ENCODE measurements at regions of chr2 and their contacts with region 1.

Region 1: DNA sequence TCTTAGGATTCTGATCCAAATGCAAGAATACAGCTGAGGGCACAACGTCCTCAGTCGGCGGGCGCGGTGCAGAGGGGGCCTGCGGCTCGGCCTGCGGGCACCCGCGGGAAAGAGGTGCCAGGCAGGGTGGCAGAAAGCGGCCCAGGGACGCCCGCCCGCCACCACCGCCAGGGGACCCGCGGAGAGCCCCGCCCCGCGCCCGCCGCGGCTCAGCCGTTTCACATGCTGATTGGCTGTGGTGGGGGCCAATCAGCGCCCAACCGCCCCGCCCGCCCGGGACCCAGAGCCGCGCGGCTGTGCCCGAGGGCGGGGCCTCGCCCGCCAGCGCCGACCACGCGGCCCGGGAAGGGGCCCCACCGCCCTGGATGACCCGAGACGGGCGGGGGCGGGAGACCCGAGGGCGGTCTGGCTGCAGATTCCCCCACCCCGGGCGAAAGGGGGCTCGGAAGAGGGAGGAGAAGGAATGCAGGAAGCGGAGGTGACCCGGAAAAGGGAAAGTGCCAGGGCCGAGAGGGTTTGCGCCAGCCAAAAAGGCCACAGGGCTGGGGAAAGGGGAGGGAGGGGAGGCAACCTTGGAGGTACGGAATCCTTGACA is 8.0 kb downstream of the IRS1 start:
- DNase-seq: peak; percentile 90 to 94
- ATAC-seq: peak; percentile 84 to 95 (median 93)
- H3K4me3 ChIP-seq: peak overlapping the region; percentile 44 to 95 (median 78)
- H3K27ac ChIP-seq: peak overlapping the region; percentile 90 to 97 (median 94)
- H3K4me1 ChIP-seq: peaks cover 8 to 94% (median 87%) of the 10 kb centered on the region in 9 donors
- H3K27me3 ChIP-seq: no peaks in the 10 kb centered on the region
- CTCF ChIP-seq: peak; percentile 10 to 68 (median 53)

Region 2: DNA sequence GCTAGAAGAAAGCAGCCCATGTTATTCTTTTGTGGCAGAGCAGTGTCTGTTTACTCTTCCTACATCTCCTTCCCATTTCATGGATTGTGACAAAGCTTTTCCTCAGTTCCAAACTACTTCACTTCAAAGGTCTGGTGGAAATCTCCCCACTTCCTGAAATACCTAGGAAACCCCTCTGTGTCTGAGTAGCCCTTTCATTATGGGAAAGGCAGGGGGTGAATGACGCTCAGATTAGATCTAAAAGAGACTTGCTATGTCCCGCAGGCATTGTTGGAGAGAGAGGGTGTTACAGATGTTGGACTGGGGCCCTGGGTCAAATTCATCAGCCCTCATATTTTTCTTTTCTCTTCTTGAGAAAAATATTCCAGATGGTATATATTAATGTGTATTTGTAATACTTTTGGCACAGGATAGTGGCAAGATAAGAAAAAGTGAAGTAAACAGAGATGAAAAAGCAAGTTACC is 667.0 kb before region 1 on chr2:
- intact Hi-C with region 1: loop called in 2 of 10 experiments (anchors 10 kb)
- DNase-seq: no peak
- ATAC-seq: peak in 3 of 8 donors; percentile 25 to 35 (median 28)
- H3K4me3 ChIP-seq: no peak overlapping the region
- H3K27ac ChIP-seq: peak overlapping the region in 4 of 10 donors; percentile 18 to 47 (median 26)
- H3K4me1 ChIP-seq: peaks cover 0 to 59% (median 5%) of the 10 kb centered on the region in 9 donors
- H3K27me3 ChIP-seq: no peaks in the 10 kb centered on the region
- CTCF ChIP-seq: no peak

Region 3: DNA sequence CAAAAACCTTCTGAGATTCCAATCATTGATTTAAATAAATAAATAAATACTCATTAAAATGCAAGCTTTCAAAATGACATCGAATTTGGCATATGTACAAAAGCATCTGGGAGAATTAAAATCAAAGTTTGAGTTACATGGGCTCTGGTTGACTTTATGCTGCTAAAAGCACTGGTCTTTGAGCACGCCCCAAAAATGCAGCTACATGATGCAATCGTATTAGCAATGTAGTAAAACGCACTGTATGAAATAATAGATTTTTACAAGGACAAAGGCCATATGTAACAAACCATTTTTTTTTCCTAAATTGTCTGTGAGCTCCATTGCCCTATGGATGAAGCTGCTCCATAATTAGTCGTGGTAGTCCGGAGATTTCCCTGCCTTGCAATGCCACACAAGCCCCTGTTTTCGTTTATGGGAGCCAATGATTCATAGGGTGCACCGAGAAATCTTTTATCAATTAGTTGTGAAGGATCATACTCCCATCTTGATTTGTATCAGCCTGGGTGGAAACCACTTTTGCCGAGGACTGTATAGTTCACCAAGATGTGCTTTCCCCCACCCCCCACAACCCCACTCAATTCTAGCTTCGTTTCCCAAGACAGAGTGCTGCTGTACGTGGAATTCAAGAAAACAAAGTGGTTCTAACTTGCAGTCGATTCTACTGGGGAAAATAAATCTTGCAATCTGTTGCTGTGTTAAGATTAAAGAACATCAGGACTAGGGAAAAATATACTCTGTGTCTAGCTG is 260.3 kb before region 1 on chr2:
- intact Hi-C with region 1: loop called in 1 of 10 experiments (anchors 10 kb)
- DNase-seq: no peak
- ATAC-seq: no peak
- H3K4me3 ChIP-seq: no peak overlapping the region
- H3K27ac ChIP-seq: no peak overlapping the region
- H3K4me1 ChIP-seq: no peaks in the 10 kb centered on the region
- H3K27me3 ChIP-seq: no peaks in the 10 kb centered on the region
- CTCF ChIP-seq: no peak

Region 4: GRCh38 chr2:226655871-226656270 is 135.7 kb before region 1 on chr2:
- intact Hi-C with region 1: loop called in 7 of 10 experiments (anchors 5 to 10 kb)
- DNase-seq: no peak
- ATAC-seq: no peak
- H3K4me3 ChIP-seq: no peak overlapping the region
- H3K27ac ChIP-seq: no peak overlapping the region
- H3K4me1 ChIP-seq: peaks cover 7 to 50% (median 31%) of the 10 kb centered on the region in 9 donors
- H3K27me3 ChIP-seq: peaks cover 0 to 38% (median 0%) of the 10 kb centered on the region in 7 donors
- CTCF ChIP-seq: no peak

Region 5: GRCh38 chr2:226721541-226721940 is 70.0 kb before region 1 on chr2:
- intact Hi-C with region 1: loop called in 4 of 10 experiments (anchors 5 to 10 kb)
- DNase-seq: peak; percentile 41
- ATAC-seq: peak in 1 of 8 donors; percentile 6
- H3K4me3 ChIP-seq: no peak overlapping the region
- H3K27ac ChIP-seq: no peak overlapping the region
- H3K4me1 ChIP-seq: peaks cover 3 to 34% (median 26%) of the 10 kb centered on the region in 9 donors
- H3K27me3 ChIP-seq: no peaks in the 10 kb centered on the region
- CTCF ChIP-seq: no peak

Region 6: DNA sequence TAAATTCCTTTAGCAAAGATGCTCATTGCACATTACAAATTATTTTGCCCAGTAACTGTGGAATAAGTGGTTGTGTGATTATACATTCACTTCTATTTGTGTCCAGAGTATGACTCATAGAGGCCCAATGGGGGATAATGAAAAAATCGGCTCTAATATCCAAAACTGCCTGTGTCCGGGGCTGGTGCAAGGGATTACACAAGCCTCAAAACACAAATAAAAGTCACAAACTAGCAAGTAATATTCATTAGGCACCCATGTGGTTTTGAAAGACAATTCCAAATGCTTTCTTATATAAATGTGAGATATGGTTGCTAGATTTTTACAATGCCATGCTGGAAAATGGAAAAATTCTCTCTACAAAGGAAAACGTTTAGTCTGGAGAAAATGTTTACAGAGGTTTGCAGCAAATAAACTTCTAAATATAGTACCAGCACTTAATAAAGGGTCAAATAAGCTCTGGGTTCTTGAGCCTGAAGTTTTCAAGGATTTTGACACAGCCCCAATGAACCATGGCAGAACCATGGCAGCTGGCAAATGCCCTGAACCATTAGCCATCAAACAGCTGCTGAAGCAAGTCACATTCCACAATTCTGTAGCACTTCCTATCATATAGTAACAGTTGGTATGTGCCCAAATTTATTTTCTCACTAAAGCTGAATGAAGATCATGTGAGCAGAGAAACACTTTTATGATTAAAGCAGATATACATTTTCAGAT is 32.5 kb before region 1 on chr2:
- intact Hi-C with region 1: loop called in 1 of 10 experiments (anchors 5 kb)
- DNase-seq: no peak
- ATAC-seq: peak; percentile 36 to 82 (median 63)
- H3K4me3 ChIP-seq: no peak overlapping the region
- H3K27ac ChIP-seq: peak overlapping the region; percentile 5 to 84 (median 72)
- H3K4me1 ChIP-seq: peaks cover 16 to 89% (median 55%) of the 10 kb centered on the region in 9 donors
- H3K27me3 ChIP-seq: no peaks in the 10 kb centered on the region
- CTCF ChIP-seq: no peak

Region 7: DNA sequence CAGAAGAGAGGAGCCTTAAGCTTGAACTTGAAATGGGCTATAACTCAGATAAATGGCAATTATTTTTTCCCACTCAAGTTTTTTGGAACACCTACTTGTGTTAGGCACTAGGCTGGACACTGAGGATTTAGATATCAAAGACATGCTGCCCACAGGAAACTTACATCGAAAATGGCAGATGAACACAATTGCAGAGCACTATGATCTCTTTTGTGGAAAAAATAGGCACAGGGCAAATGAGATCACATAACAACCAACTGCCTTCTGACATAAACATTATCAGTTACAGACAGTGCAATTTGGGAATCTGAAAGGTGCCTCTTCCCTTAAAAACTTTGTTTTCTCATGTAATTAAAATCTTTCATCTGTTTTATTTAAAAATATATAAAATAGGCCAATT is 11.8 kb after region 1 on chr2:
- intact Hi-C with region 1: no loop called
- DNase-seq: no peak
- ATAC-seq: no peak
- H3K4me3 ChIP-seq: no peak overlapping the region
- H3K27ac ChIP-seq: no peak overlapping the region
- H3K4me1 ChIP-seq: peaks cover 0 to 29% (median 26%) of the 10 kb centered on the region in 9 donors
- H3K27me3 ChIP-seq: peaks cover 0 to 65% (median 0%) of the 10 kb centered on the region in 7 donors
- CTCF ChIP-seq: no peak

Region 8: GRCh38 chr2:226887940-226888339 is 96.4 kb after region 1 on chr2:
- intact Hi-C with region 1: no loop called
- DNase-seq: no peak
- ATAC-seq: no peak
- H3K4me3 ChIP-seq: no peak overlapping the region
- H3K27ac ChIP-seq: no peak overlapping the region
- H3K4me1 ChIP-seq: peaks cover 0 to 8% (median 0%) of the 10 kb centered on the region in 9 donors
- H3K27me3 ChIP-seq: no peaks in the 10 kb centered on the region
- CTCF ChIP-seq: no peak

Region 9: GRCh38 chr2:227179988-227180685 is 388.6 kb after region 1 on chr2:
- intact Hi-C with region 1: no loop called
- DNase-seq: peak; percentile 10 to 27
- ATAC-seq: peak; percentile 69 to 98 (median 83)
- H3K4me3 ChIP-seq: peak overlapping the region in 1 of 10 donors; percentile 3
- H3K27ac ChIP-seq: peak overlapping the region in 8 of 10 donors; percentile 23 to 79 (median 42)
- H3K4me1 ChIP-seq: peaks cover 0 to 16% (median 5%) of the 10 kb centered on the region in 9 donors
- H3K27me3 ChIP-seq: no peaks in the 10 kb centered on the region
- CTCF ChIP-seq: no peak

Measured in heart right ventricle (tissue), 16 donors.